Activated CD8-positive, alpha-beta T cell treated with anti-CD3 and anti-CD28 coated beads for 36 hours (primary cell): ENCODE measurements at regions of chr10 and their contacts with region 1.

Region 1: DNA sequence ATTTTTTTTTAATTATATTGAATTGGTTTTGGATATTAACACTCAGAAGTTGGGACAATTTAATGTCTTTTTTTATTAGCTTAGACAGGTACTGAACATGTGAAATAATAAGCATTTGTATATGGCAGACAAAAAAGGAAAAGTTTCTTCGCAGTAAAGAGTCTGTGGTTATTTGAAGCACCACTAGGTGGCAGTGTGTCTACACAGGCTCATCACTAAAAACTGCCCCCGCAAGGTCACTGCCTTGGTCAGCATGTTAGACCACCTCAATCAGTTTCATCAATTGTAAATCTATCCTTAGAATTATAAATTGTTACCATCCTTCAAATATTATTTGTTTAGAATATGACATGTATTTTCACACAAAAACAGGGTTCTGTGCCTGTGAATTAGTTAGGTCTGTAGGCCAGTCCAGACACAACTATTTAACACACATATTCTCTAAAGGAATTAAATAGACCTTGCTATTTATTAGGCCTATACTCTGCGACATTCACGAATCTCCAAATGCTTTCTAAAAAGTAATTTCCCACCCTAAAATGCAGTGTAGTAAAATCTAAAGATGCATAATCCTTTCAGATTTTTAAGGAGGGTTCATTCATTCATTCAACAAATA is 17.0 kb downstream of the PNLIPRP3 start:
- DNase-seq: peak; percentile 25
- ATAC-seq: no peak
- H3K4me3 Mint-ChIP-seq: no peak overlapping the region
- H3K27ac Mint-ChIP-seq: no peak overlapping the region
- H3K4me1 Mint-ChIP-seq: no peaks in the 10 kb centered on the region
- H3K27me3 Mint-ChIP-seq: peaks cover 3% of the 10 kb centered on the region
- CTCF ChIP-seq: peak; percentile 73

Region 2: DNA sequence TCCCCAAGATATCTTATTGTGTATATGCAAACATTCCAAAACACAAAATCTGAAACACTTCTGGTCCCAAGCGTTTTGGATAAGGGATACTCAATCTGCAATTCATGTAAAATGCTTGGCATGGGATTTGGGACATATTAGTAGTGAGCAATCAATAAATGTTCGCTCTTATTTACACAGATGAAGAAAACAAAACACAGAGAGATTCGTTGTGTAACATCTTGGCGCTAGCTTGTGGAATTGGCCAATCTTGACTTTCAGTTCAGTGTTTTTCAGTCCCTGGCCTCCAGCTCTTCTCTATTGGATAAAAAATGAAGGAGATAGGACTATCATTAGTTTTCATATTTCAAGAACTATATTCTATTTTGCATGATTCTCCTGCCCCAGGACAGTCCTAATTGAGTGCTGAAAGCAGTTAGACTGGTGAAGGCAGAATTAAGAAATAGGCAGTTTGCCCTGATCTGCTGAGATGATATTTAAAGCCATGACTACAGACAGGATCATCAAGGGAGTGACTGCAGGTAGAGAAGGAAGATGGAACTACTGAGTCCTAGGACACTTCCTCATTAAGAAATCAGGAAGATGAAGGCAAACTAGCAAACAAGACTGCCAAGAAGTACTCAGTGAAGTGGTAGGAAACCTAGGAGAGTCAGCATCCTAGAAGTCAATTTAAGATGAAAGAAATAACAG is 15.2 kb before region 1 on chr10:
- CTCF ChIA-PET with region 1: no interaction called
- POLR2A ChIA-PET with region 1: no interaction called
- intact Hi-C with region 1: no loop called
- DNase-seq: no peak
- ATAC-seq: no peak
- H3K4me3 Mint-ChIP-seq: no peak overlapping the region
- H3K27ac Mint-ChIP-seq: no peak overlapping the region
- H3K4me1 Mint-ChIP-seq: no peaks in the 10 kb centered on the region
- H3K27me3 Mint-ChIP-seq: peaks cover 3% of the 10 kb centered on the region
- CTCF ChIP-seq: no peak

Region 3: DNA sequence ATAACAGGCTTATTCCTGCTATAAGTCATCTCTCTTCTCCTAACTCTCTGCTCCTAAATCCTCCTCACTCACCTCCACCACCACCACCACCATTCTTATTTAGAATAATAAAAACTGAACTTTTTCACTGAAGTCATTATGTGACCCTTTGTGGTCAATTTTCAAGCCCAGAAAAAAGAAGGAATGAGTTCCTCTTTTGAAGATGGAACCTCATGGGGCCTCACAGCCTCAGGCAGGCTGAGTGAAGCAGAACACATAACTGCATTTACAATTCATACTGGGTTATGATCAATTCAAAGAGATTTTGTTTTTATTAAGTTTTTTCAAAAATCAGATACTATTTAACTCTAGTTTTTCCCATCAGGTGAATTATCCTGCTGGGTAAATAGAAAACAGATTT is 12.9 kb after region 1 on chr10:
- CTCF ChIA-PET with region 1: no interaction called
- POLR2A ChIA-PET with region 1: no interaction called
- intact Hi-C with region 1: no loop called
- DNase-seq: no peak
- ATAC-seq: no peak
- H3K4me3 Mint-ChIP-seq: no peak overlapping the region
- H3K27ac Mint-ChIP-seq: no peak overlapping the region
- H3K4me1 Mint-ChIP-seq: no peaks in the 10 kb centered on the region
- H3K27me3 Mint-ChIP-seq: peaks cover 5% of the 10 kb centered on the region
- CTCF ChIP-seq: no peak

Region 4: GRCh38 chr10:116490028-116490662 is 45.5 kb after region 1 on chr10:
- CTCF ChIA-PET with region 1: interaction called, 3 read pairs
- POLR2A ChIA-PET with region 1: no interaction called
- intact Hi-C with region 1: loop called (anchors 5 kb)
- DNase-seq: no peak
- ATAC-seq: no peak
- H3K4me3 Mint-ChIP-seq: no peak overlapping the region
- H3K27ac Mint-ChIP-seq: no peak overlapping the region
- H3K4me1 Mint-ChIP-seq: no peaks in the 10 kb centered on the region
- H3K27me3 Mint-ChIP-seq: peaks cover 5% of the 10 kb centered on the region
- CTCF ChIP-seq: peak; percentile 64